CD4-positive, alpha-beta T cell (primary cell): ENCODE measurements at regions of chr2 and their contacts with region 1.

Region 1: DNA sequence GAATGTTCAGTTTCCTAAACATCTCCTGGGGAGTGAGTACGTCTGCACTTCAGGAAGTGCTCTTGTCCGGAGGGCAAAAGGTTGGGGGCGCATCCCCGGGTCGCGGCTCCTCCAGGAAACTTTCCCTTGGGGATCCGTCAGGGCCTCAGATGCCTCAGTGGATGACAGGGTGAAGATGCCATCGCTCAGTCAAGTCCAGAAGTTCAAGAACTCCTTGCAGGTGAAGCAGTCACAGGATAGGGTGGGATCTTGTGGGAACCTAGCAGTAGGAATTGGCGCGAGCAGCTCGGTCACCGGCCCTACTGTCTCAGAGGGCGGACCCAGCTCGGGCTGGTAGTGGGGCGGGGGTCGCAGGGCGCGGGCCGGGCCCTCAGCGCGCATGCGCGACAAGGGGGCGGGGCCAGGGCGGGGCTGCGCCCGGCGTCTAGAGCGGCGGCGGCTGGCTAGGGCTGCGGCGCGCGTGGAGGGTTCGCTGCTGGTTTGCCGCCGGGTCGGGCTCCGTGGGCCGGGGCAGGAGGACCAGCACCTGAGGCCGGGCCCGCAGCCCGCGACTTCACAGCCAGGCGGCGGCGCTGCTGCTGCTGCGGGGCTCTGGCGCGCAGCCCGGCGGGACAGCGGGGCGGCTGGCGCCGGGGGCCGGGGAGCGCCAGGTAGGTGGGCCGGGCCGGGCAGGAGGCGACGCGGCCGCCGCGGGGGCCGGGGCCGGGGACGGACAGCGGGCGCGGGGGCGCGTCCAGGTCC is at the start of gene INPP4A:
- DNase-seq: peak; percentile 67 to 93 (median 77)
- ATAC-seq: peak; percentile 64
- H3K4me3 ChIP-seq: peak within 1 kb of the TSS; percentile 94
- H3K4me3 Mint-ChIP-seq: peak within 1 kb of the TSS; percentile 96
- H3K27ac ChIP-seq: peak within 1 kb of the TSS; percentile 53 to 72
- H3K27ac Mint-ChIP-seq: peak within 1 kb of the TSS; percentile 90
- H3K4me1 ChIP-seq: peaks cover 25% of the 10 kb centered on the region
- H3K4me1 Mint-ChIP-seq: peaks cover 52% of the 10 kb centered on the region
- H3K27me3 ChIP-seq: no peaks in the 10 kb centered on the region
- H3K27me3 Mint-ChIP-seq: no peaks in the 10 kb centered on the region
- CTCF ChIP-seq: no peak
- total RNA-seq, gene INPP4A: 86.4 to 89.2 TPM

Region 2: GRCh38 chr2:98149333-98149697 is 295.3 kb before region 1 on chr2:
- CTCF ChIA-PET with region 1: no interaction called
- POLR2A ChIA-PET with region 1: no interaction called
- intact Hi-C with region 1: no loop called
- DNase-seq: peak in 3 of 14 experiments; percentile 29 to 58 (median 52)
- ATAC-seq: peak; percentile 72
- H3K4me3 ChIP-seq: no peak overlapping the region
- H3K4me3 Mint-ChIP-seq: no peak overlapping the region
- H3K27ac ChIP-seq: no peak overlapping the region
- H3K27ac Mint-ChIP-seq: no peak overlapping the region
- H3K4me1 ChIP-seq: peaks cover 9% of the 10 kb centered on the region
- H3K4me1 Mint-ChIP-seq: no peaks in the 10 kb centered on the region
- H3K27me3 ChIP-seq: no peaks in the 10 kb centered on the region
- H3K27me3 Mint-ChIP-seq: peaks cover 5% of the 10 kb centered on the region
- CTCF ChIP-seq: no peak

Region 3: GRCh38 chr2:98295721-98296414 is 148.7 kb before region 1 on chr2:
- CTCF ChIA-PET with region 1: no interaction called
- POLR2A ChIA-PET with region 1: no interaction called
- intact Hi-C with region 1: no loop called
- DNase-seq: no peak
- ATAC-seq: no peak
- H3K4me3 ChIP-seq: no peak overlapping the region
- H3K4me3 Mint-ChIP-seq: no peak overlapping the region
- H3K27ac ChIP-seq: no peak overlapping the region
- H3K27ac Mint-ChIP-seq: no peak overlapping the region
- H3K4me1 ChIP-seq: no peaks in the 10 kb centered on the region
- H3K4me1 Mint-ChIP-seq: no peaks in the 10 kb centered on the region
- H3K27me3 ChIP-seq: peaks cover 7 to 15% of the 10 kb centered on the region in 2 experiments
- H3K27me3 Mint-ChIP-seq: peaks cover 30% of the 10 kb centered on the region
- CTCF ChIP-seq: no peak

Region 4: DNA sequence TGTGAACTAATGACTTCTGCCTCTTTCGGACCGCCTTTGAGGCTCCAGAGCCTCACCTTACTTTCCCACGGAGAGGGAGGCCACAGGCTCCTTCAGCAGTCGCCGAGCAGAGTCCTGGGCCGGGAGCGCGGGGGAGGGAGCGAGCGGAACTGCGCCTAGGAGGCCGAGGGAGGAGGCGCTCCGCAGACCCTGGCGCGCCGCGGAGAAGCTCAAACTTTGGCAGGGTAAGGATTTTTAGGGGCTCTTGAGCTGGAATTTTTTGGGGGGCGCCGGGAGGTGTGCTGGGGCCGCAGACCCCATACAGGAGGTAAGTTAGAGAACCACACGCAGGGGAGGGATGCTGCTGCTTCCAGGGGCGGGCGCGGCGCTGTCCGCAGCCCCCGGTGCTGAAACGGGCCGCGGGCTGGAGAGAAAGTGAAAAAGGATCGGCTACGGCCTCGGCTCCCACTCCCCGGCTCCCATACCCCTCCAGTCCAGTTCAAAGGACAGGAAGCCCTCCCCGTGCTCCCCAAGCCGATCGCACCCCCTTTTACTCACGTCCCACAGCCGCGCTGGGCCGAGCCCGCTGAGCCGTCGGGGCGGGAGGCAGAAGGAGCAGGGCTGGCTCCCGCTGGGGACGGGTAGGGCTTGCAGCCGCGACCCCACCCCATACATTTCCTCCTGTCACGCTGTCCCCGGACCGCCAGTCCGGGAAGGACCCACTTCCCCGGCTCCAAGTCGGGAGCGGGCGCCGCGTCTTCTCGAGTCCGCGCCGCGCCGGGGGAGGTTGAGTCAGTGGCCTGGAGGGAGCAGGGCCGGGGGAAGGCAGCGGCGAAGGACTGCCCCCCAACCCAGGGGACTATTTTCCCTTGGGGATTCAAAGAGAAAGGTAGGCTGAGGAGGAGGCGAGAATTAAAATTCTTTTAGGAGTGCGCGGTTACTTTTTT is 98.0 kb before region 1 on chr2 and contains the start of gene CNGA3:
- CTCF ChIA-PET with region 1: no interaction called
- POLR2A ChIA-PET with region 1: no interaction called
- intact Hi-C with region 1: no loop called
- DNase-seq: peak in 4 of 14 experiments; percentile 1 to 16 (median 8)
- ATAC-seq: no peak
- H3K4me3 ChIP-seq: no peak within 1 kb of the TSS
- H3K4me3 Mint-ChIP-seq: no peak within 1 kb of the TSS
- H3K27ac ChIP-seq: no peak within 1 kb of the TSS
- H3K27ac Mint-ChIP-seq: no peak within 1 kb of the TSS
- H3K4me1 ChIP-seq: peaks cover 20% of the 10 kb centered on the region
- H3K4me1 Mint-ChIP-seq: peaks cover 18% of the 10 kb centered on the region
- H3K27me3 ChIP-seq: peaks cover 50 to 65% of the 10 kb centered on the region in 2 experiments
- H3K27me3 Mint-ChIP-seq: peaks cover 88% of the 10 kb centered on the region
- CTCF ChIP-seq: no peak
- total RNA-seq, gene CNGA3: not detected

Region 5: DNA sequence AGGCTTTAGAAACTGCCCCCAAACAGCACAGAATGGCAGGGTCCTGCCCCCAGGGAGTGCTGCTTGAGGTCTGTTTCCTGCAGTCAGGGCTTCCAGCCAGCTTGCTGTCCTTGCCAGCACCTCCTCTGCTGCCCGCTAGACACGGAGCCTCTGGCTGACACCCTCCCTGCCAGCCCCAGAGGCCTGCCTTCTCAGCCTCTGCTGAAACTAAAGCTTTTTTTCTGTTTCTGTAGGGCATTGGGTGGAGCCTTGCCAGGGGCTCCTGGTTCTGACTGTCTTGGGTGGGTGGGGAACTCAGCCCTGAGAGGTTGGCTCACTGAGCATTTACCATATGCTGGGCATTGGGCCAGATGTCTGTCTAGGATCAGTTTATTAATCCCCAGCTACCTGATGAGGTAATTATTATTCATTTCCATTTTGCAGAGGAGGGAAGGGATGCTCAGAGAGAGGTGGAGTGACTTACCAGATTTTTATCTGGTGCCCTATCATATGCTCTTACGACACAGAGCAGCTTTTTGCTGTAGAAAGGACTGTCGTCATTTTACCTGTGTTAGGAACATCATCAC is 35.4 kb after region 1 on chr2:
- CTCF ChIA-PET with region 1: interaction called, 11 read pairs
- POLR2A ChIA-PET with region 1: interaction called, 9 read pairs
- intact Hi-C with region 1: loop called in 1 of 2 experiments (anchors 2 kb)
- DNase-seq: peak in 9 of 14 experiments; percentile 36 to 63 (median 47)
- ATAC-seq: peak; percentile 68
- H3K4me3 ChIP-seq: no peak overlapping the region
- H3K4me3 Mint-ChIP-seq: peak overlapping the region; percentile 62
- H3K27ac ChIP-seq: peak overlapping the region; percentile 58 to 69
- H3K27ac Mint-ChIP-seq: peak overlapping the region; percentile 72
- H3K4me1 ChIP-seq: peaks cover 97% of the 10 kb centered on the region
- H3K4me1 Mint-ChIP-seq: peaks cover 100% of the 10 kb centered on the region
- H3K27me3 ChIP-seq: no peaks in the 10 kb centered on the region
- H3K27me3 Mint-ChIP-seq: no peaks in the 10 kb centered on the region
- CTCF ChIP-seq: no peak

Region 6: GRCh38 chr2:98487806-98488651 is 43.4 kb after region 1 on chr2:
- CTCF ChIA-PET with region 1: interaction called, 6 read pairs
- POLR2A ChIA-PET with region 1: interaction called, 15 read pairs
- intact Hi-C with region 1: loop called (anchors 2 kb)
- DNase-seq: peak in 12 of 14 experiments; percentile 37 to 80 (median 50)
- ATAC-seq: peak; percentile 86
- H3K4me3 ChIP-seq: no peak overlapping the region
- H3K4me3 Mint-ChIP-seq: peak overlapping the region; percentile 54
- H3K27ac ChIP-seq: no peak overlapping the region
- H3K27ac Mint-ChIP-seq: peak overlapping the region; percentile 57
- H3K4me1 ChIP-seq: peaks cover 79% of the 10 kb centered on the region
- H3K4me1 Mint-ChIP-seq: peaks cover 100% of the 10 kb centered on the region
- H3K27me3 ChIP-seq: no peaks in the 10 kb centered on the region
- H3K27me3 Mint-ChIP-seq: no peaks in the 10 kb centered on the region
- CTCF ChIP-seq: peak; percentile 66

Region 7: DNA sequence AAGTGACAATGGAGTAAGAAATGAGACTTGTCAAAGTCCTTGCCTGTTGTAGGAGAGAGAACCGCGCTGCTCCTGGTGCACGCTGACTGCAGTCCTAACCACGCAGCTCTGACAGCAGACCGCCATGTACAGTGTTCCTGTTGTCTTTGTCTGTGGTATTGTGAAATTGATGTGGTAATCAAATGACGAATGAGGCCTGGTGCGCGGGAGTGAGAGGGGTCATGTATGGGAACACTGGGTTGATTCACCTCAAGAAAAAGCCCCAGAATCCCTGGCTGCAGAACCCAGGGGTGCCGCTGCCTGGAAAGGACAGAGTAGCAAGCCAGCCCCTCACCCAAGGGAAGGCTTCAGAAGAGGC is 64.1 kb after region 1 on chr2:
- CTCF ChIA-PET with region 1: interaction called, 3 read pairs
- POLR2A ChIA-PET with region 1: no interaction called
- intact Hi-C with region 1: loop called in 1 of 2 experiments (anchors 5 kb)
- DNase-seq: peak in 12 of 14 experiments; percentile 16 to 80 (median 44)
- ATAC-seq: peak; percentile 88
- H3K4me3 ChIP-seq: no peak overlapping the region
- H3K4me3 Mint-ChIP-seq: peak overlapping the region; percentile 49
- H3K27ac ChIP-seq: no peak overlapping the region
- H3K27ac Mint-ChIP-seq: peak overlapping the region; percentile 83
- H3K4me1 ChIP-seq: peaks cover 84% of the 10 kb centered on the region
- H3K4me1 Mint-ChIP-seq: peaks cover 93% of the 10 kb centered on the region
- H3K27me3 ChIP-seq: no peaks in the 10 kb centered on the region
- H3K27me3 Mint-ChIP-seq: no peaks in the 10 kb centered on the region
- CTCF ChIP-seq: no peak

Region 8: DNA sequence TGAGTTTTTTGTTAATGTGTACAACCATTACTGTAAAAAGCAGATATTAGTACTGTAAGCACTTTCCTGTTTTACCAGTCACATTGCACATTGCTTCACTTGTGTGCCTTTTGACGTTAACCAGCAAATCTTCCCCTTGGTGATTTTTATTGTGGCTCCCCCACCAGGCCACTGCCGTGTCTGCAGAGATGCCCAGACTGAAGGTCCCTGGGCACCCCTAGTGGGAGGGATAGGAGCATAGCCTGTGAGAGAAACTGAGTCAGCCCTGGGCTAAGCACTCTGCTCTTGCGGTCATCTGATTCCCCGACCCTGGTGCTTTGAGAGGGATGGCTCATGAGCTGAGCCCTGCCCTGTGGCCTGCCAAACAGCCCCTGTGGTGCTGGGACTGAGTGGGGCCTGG is 73.5 kb after region 1 on chr2:
- CTCF ChIA-PET with region 1: no interaction called
- POLR2A ChIA-PET with region 1: no interaction called
- intact Hi-C with region 1: loop called (anchors 1 to 2 kb)
- DNase-seq: peak; percentile 36 to 81 (median 58)
- ATAC-seq: peak; percentile 94
- H3K4me3 ChIP-seq: no peak overlapping the region
- H3K4me3 Mint-ChIP-seq: no peak overlapping the region
- H3K27ac ChIP-seq: no peak overlapping the region
- H3K27ac Mint-ChIP-seq: peak overlapping the region; percentile 61
- H3K4me1 ChIP-seq: peaks cover 46% of the 10 kb centered on the region
- H3K4me1 Mint-ChIP-seq: peaks cover 63% of the 10 kb centered on the region
- H3K27me3 ChIP-seq: no peaks in the 10 kb centered on the region
- H3K27me3 Mint-ChIP-seq: no peaks in the 10 kb centered on the region
- CTCF ChIP-seq: peak; percentile 87

Region 9: GRCh38 chr2:98608116-98608999 is 163.8 kb after region 1 on chr2 and contains the starts of genes COA5 and UNC50:
- CTCF ChIA-PET with region 1: no interaction called
- POLR2A ChIA-PET with region 1: no interaction called
- intact Hi-C with region 1: no loop called
- DNase-seq: peak; percentile 84 to 95 (median 89)
- ATAC-seq: peak; percentile 83
- H3K4me3 ChIP-seq: peak within 1 kb of the TSS; percentile 77
- H3K4me3 Mint-ChIP-seq: peak within 1 kb of the TSS; percentile 85
- H3K27ac ChIP-seq: peak within 1 kb of the TSS; percentile 87 to 91
- H3K27ac Mint-ChIP-seq: peak within 1 kb of the TSS; percentile 89
- H3K4me1 ChIP-seq: peaks cover 43% of the 10 kb centered on the region
- H3K4me1 Mint-ChIP-seq: peaks cover 72% of the 10 kb centered on the region
- H3K27me3 ChIP-seq: no peaks in the 10 kb centered on the region
- H3K27me3 Mint-ChIP-seq: no peaks in the 10 kb centered on the region
- CTCF ChIP-seq: no peak
- total RNA-seq, gene COA5: 29.2 to 30.1 TPM
- total RNA-seq, gene UNC50: 17.1 to 17.5 TPM